ENCODE measurements at regions of chr3 and their contacts with region 1.

Region 1: DNA sequence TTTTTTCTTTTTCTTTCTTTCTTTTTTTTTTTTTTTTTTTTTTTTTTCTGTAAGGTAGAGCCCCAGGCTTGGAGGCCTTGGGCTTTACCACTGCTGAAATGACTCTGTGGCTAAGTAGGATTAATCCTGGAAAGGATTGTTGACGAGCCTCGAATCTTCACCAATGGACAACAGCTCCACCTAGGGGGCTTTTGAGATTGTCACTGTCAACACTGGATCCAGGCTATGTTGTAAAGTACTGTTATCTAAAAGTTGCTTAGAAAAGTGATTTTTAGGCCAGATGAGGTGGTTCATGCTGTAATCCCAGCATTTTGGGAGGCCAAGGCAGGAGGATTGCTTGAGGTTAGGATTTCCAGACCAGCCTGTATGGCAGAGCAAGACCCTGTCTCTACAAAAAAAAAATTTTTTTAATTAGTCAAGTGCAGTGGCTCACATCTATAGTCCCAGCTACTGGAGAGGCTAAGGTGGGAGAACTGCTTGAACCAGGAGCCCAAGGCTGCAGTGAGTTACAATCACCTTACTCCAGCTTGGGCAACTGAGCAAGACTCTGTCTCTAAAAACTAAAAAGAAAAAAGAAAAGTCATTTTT is 41.6 kb downstream of the KLHL18 start:
- H3K4me3 Mint-ChIP-seq: no peak overlapping the region
- H3K27ac Mint-ChIP-seq: no peak overlapping the region
- H3K4me1 Mint-ChIP-seq: peaks cover 11% of the 10 kb centered on the region
- H3K27me3 Mint-ChIP-seq: no peaks in the 10 kb centered on the region

Region 2: GRCh38 chr3:47250309-47251060 is 73.9 kb before region 1 on chr3:
- intact Hi-C with region 1: loop called (anchors 1 kb)
- H3K4me3 Mint-ChIP-seq: no peak overlapping the region
- H3K27ac Mint-ChIP-seq: no peak overlapping the region
- H3K4me1 Mint-ChIP-seq: peaks cover 7% of the 10 kb centered on the region
- H3K27me3 Mint-ChIP-seq: no peaks in the 10 kb centered on the region

Region 3: GRCh38 chr3:47422421-47423142 is 98.2 kb after region 1 on chr3:
- intact Hi-C with region 1: no loop called
- H3K4me3 Mint-ChIP-seq: no peak overlapping the region
- H3K27ac Mint-ChIP-seq: peak overlapping the region; percentile 89
- H3K4me1 Mint-ChIP-seq: peaks cover 24% of the 10 kb centered on the region
- H3K27me3 Mint-ChIP-seq: no peaks in the 10 kb centered on the region

Measured in dendritic cell treated with granulocyte-macrophage colony-stimulating factor and Interleukin-4, amounts not matched to agents 40 ng/mL and 50 ng/mL, for 4 days (primary cell).